Right ventricle myocardium superior (tissue), 1 donor: ENCODE measurements at regions of chr1 and their contacts with region 1.

Region 1: GRCh38 chr1:25430666-25431505 is at the start of gene MACO1:
- DNase-seq: peak; percentile 97
- ATAC-seq: peak; percentile 97
- total RNA-seq, gene MACO1: 14.8 TPM

Region 2: GRCh38 chr1:25042331-25043227 is 388.3 kb before region 1 on chr1:
- intact Hi-C with region 1: no loop called
- DNase-seq: peak; percentile 8
- ATAC-seq: no peak

Region 3: GRCh38 chr1:25338188-25338981 is 92.5 kb before region 1 on chr1 and contains the start of gene TMEM50A:
- intact Hi-C with region 1: no loop called
- DNase-seq: peak; percentile 94
- ATAC-seq: peak; percentile 98
- total RNA-seq, gene TMEM50A: 73.5 TPM

Region 4: DNA sequence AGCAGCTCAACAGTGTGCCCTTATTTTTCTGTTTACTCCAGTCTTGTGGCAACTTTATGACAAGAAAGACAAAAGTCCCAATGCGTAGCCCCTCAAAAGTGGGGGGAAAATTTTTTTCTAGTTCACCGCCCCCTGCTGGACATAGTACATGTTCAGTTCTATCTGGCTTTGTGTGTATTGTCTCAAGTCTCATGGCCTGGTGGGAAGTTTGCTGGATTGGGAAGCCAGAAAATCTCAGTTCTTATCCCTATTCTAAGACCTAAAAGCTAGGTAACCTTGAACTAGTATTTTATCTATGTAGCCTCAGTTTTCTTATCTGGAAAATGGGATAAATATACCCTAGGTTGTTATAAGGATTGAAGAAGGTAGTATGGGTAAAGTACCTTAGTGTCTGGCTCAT is 56.7 kb after region 1 on chr1:
- intact Hi-C with region 1: loop called (anchors 10 kb)
- DNase-seq: no peak
- ATAC-seq: no peak